IMR-90 (cell line): ENCODE measurements at regions of chr18 and their contacts with region 1.

Region 1: DNA sequence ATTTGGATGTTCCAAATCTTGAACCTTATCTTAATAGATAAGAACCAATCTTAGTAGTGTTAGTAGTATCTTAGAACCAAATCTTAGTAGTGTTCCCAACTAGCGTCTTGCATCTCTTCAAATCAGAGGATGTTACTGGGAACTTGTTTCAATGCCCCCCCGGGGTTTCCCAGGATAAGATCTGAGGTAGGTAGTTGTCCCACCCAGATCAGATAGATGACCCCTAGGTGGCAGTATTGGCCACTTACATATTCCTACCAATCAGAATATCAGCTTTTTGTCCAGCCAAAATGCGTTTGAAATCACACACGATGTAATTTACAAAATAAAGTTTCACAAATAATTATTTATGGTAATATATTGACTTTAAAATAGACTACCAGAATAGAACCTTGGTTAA is 314.8 kb downstream of the MBD2 start:
- DNase-seq: peak; percentile 1
- ATAC-seq: no peak
- H3K4me3 ChIP-seq: no peak overlapping the region
- H3K27ac ChIP-seq: no peak overlapping the region
- H3K4me1 ChIP-seq: no peaks in the 10 kb centered on the region
- H3K27me3 ChIP-seq: no peaks in the 10 kb centered on the region
- CTCF ChIP-seq: peak; percentile 22; the same call in 1 of the 2 replicates
- POLR2A ChIP-seq: no peak
- RAD21 ChIP-seq: 0 out of 2 replicates have a peak, but pooled peaks have one; percentile 12

Region 2: DNA sequence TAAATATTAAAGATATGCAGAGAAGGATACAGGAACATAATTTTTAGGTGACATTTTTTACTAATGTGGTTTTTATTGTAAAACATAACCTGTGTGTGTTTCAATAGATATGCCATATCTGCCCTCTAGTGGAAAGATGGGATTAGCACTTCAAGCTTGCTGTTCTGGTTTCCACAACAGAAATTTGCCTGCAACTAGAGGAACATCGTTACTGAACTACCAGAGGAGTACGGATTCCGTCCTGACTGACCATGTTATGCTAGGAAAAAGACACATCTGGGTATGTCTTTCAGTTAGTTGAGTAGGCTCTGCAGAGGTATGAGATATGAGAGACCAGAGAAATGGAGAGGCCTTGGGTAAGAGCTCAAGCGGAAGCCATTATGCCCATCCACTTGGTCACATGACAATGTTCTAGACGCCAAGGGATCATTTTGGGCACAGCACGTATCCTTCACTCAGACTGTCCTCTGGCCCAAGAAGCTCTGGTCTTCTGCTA is 209.9 kb after region 1 on chr18:
- CTCF ChIA-PET with region 1: no interaction called
- POLR2A ChIA-PET with region 1: no interaction called
- dilution Hi-C with region 1: no loop called
- in situ Hi-C with region 1: no loop called
- intact Hi-C with region 1: loop called (anchors 5 kb)
- DNase-seq: peak; percentile 59
- ATAC-seq: peak; percentile 80
- H3K4me3 ChIP-seq: no peak overlapping the region
- H3K27ac ChIP-seq: no peak overlapping the region
- H3K4me1 ChIP-seq: no peaks in the 10 kb centered on the region
- H3K27me3 ChIP-seq: no peaks in the 10 kb centered on the region; the same call in 1 of the 2 replicates
- CTCF ChIP-seq: peak; percentile 73
- POLR2A ChIP-seq: no peak
- RAD21 ChIP-seq: peak; percentile 71